ENCODE measurements at regions of chr7 and their contacts with region 1.

Region 1: DNA sequence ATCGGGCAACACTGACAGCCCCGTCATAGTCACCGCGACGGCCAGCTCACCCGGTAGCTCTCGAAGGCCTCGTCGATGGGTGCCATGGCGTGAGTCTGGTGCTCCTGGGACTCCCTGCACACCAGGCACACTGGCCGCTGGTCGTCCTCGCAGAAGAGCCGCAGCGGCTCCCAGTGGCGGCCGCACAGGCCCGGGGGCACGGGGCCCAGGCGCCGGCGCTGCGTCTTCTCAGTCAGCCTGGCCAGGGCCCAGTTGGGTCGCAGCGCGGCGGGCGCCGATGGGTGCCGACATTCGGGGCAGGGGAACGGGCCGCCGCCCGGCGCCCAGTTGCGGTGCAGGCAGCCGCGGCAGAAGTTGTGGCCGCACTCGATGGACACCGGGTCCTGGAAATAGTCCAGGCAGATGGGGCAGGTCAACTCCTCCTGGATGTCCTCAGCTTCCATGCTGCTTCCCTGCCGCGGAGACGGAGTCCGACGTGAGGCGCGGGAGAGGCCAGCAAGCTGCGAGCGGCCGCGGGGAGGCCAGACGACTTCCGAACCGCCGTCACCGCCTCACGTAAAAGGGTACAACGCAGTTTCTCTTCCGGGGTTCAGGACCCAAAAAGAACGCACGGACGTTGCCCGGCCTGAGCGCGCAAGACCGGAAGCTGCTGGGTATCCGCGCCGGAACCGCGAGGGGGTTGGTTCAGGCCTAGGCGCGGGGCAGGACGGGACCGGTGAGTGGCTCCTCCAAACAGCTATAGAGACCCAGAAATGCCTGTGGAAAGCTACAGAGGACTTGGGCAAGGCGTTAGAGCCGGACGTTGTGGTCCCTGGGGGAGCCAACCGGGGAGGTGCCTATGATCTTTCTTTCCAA is at the start of gene TRIM4:
- DNase-seq: peak; percentile 92
- ATAC-seq: peak; percentile 97
- H3K4me3 ChIP-seq: peak within 1 kb of the TSS; percentile 65 to 89 (median 78)
- H3K4me3 Mint-ChIP-seq: peak within 1 kb of the TSS; percentile 96
- H3K27ac ChIP-seq: peak within 1 kb of the TSS; percentile 81 to 93
- H3K27ac Mint-ChIP-seq: peak within 1 kb of the TSS; percentile 97
- H3K4me1 ChIP-seq: peaks cover 32 to 35% of the 10 kb centered on the region in 2 donors
- H3K4me1 Mint-ChIP-seq: peaks cover 47% of the 10 kb centered on the region
- H3K27me3 ChIP-seq: no peaks in the 10 kb centered on the region
- H3K27me3 Mint-ChIP-seq: peaks cover 6% of the 10 kb centered on the region
- CTCF ChIP-seq: peak; percentile 21
- total RNA-seq, gene TRIM4: 56.7 and 58.1 TPM in 2 replicates

Region 2: DNA sequence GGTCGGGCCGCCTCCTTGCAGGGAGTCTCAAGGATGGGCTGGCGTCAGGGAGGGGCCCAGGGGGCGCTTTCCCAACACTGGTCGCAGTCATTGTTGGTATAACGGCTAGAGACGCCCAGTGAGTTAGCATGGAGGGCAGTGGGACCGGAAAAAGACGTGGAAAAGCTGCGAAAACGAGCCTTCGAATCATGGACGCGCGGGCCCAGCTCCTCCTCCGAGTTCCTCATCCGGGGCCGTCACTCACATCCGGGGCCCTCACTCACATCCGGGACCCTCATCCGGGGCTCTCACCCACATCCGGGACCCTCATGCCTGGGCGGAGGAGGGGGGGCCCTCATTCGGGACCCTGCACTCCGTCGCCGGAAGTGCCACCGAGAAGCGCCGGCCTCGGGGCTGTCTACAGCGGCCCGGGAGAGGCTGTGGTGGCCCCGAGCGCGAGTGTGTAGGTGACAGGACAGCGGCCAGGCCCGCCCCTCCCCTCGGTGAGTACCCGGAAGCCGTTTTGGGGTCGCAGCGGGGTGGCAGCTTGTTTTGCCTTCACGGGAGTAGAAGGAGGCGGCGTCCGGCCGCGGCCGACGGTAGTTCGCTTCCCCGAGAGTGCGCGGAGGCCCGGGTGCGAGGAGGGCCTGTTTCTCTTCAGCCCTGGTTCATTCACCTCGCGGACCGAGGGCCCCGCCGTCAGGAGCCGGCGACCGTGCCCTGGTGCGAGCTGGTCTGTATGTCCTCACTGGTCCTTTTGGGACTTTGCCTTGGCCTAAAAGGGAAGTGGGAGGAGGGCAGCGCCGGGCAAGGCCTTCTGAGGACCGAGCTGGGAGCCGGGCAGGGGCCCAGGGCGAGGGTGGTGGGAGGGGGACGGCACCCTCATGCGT is 360.6 kb before region 1 on chr7 and contains the start of gene ZNF655:
- CTCF ChIA-PET with region 1: no interaction called
- POLR2A ChIA-PET with region 1: no interaction called
- intact Hi-C with region 1: loop called (anchors 2 kb)
- DNase-seq: peak; percentile 94
- ATAC-seq: peak; percentile 80
- H3K4me3 ChIP-seq: peak within 1 kb of the TSS; percentile 77 to 97 (median 92)
- H3K4me3 Mint-ChIP-seq: peak within 1 kb of the TSS; percentile 98
- H3K27ac ChIP-seq: peak within 1 kb of the TSS; percentile 91 to 98
- H3K27ac Mint-ChIP-seq: peak within 1 kb of the TSS; percentile 98
- H3K4me1 ChIP-seq: peaks cover 19 to 25% of the 10 kb centered on the region in 2 donors
- H3K4me1 Mint-ChIP-seq: peaks cover 42% of the 10 kb centered on the region
- H3K27me3 ChIP-seq: no peaks in the 10 kb centered on the region
- H3K27me3 Mint-ChIP-seq: no peaks in the 10 kb centered on the region
- CTCF ChIP-seq: no peak
- total RNA-seq, gene ZNF655: 150 and 154 TPM in 2 replicates

Region 3: GRCh38 chr7:99949638-99950228 is 30.5 kb after region 1 on chr7:
- CTCF ChIA-PET with region 1: interaction called, 11 read pairs
- POLR2A ChIA-PET with region 1: no interaction called
- intact Hi-C with region 1: no loop called
- DNase-seq: no peak
- ATAC-seq: no peak
- H3K4me3 ChIP-seq: no peak overlapping the region
- H3K4me3 Mint-ChIP-seq: no peak overlapping the region
- H3K27ac ChIP-seq: no peak overlapping the region
- H3K27ac Mint-ChIP-seq: no peak overlapping the region
- H3K4me1 ChIP-seq: peaks cover 0 to under 1% of the 10 kb centered on the region in 2 donors
- H3K4me1 Mint-ChIP-seq: peaks cover under 1% of the 10 kb centered on the region
- H3K27me3 ChIP-seq: peaks cover 0 to 22% (median 3%) of the 10 kb centered on the region in 4 experiments
- H3K27me3 Mint-ChIP-seq: peaks cover 35% of the 10 kb centered on the region
- CTCF ChIP-seq: no peak

Region 4: DNA sequence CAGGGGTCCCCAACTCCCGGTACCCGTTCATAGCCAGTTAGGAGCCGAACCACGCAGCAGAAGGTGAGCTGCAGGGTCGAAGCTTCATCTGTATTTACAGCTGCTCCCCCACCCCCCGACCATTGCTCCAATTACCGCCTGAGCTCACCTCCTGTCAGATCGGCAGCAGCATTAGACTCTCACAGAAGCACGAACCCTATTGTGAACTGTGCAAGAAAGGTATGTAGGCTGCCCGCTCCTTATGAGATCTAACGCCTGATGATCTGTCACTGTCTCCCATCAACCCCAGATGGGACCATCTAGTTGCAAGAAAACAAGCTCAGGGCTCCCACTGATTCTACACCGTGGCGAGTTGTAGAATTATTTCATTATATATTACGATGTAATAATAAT is 71.3 kb after region 1 on chr7:
- CTCF ChIA-PET with region 1: interaction called, 94 read pairs
- POLR2A ChIA-PET with region 1: no interaction called
- intact Hi-C with region 1: no loop called
- DNase-seq: no peak
- ATAC-seq: no peak
- H3K4me3 ChIP-seq: no peak overlapping the region
- H3K4me3 Mint-ChIP-seq: no peak overlapping the region
- H3K27ac ChIP-seq: no peak overlapping the region
- H3K27ac Mint-ChIP-seq: no peak overlapping the region
- H3K4me1 ChIP-seq: peaks cover 0 to 4% of the 10 kb centered on the region in 2 donors
- H3K4me1 Mint-ChIP-seq: peaks cover 3% of the 10 kb centered on the region
- H3K27me3 ChIP-seq: peaks cover 0 to 8% (median 0%) of the 10 kb centered on the region in 4 experiments
- H3K27me3 Mint-ChIP-seq: peaks cover 24% of the 10 kb centered on the region
- CTCF ChIP-seq: no peak

Region 5: DNA sequence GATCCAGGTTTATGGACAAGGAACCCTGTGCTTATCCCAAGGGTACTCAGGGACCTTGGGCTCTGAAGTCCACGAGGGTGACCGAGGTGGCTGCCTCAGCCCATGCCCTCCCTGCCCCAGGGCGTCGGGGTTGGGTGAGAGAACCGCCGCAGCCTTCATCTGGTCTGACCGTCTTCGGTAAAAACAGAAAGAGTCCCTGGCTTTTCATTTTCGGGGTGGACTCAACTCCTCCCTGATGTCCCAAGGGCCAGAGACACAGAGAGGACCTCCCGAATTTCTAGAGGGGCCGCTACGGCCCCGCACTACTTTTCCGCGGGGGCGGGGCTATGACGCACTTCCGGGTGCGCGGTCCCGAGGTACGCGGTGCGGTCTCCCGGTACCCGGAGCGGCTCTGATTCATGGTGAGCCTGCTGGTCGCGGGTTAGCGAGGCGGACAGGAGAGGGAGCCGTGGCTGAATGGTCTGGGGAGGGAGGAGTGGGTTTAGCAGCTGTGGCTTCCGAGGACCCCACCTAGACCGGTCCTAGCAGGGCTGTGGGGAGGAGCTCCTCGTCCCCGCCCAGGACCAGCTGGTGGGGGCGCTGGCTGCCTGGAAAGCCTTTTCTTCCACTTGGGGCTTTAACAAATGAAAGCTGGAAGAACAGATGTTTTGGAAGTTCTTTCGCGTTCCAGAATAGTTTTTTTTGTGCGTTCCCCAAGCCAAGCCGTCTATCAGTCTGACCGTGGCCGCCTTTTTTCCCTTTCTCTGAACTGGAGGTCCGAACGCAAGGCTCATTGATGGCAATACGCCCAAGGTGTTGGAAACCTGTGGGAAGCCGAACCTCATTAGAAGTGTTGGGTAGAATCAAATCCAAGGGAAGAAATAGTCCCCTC is 130.5 kb after region 1 on chr7 and contains the start of gene ZSCAN21:
- CTCF ChIA-PET with region 1: interaction called, 7 read pairs
- POLR2A ChIA-PET with region 1: interaction called, 4 read pairs
- intact Hi-C with region 1: loop called (anchors 2 kb)
- DNase-seq: peak; percentile 91
- ATAC-seq: peak; percentile 90
- H3K4me3 ChIP-seq: peak within 1 kb of the TSS; percentile 69 to 97 (median 92)
- H3K4me3 Mint-ChIP-seq: peak within 1 kb of the TSS; percentile 97
- H3K27ac ChIP-seq: peak within 1 kb of the TSS; percentile 89 to 95
- H3K27ac Mint-ChIP-seq: peak within 1 kb of the TSS; percentile 97
- H3K4me1 ChIP-seq: peaks cover 6 to 17% of the 10 kb centered on the region in 2 donors
- H3K4me1 Mint-ChIP-seq: peaks cover 19% of the 10 kb centered on the region
- H3K27me3 ChIP-seq: no peaks in the 10 kb centered on the region
- H3K27me3 Mint-ChIP-seq: no peaks in the 10 kb centered on the region
- CTCF ChIP-seq: no peak
- total RNA-seq, gene ZSCAN21: 12.9 and 13.2 TPM in 2 replicates